A673 (cell line): ENCODE measurements at regions of chr13 and their contacts with region 1.

Region 1: DNA sequence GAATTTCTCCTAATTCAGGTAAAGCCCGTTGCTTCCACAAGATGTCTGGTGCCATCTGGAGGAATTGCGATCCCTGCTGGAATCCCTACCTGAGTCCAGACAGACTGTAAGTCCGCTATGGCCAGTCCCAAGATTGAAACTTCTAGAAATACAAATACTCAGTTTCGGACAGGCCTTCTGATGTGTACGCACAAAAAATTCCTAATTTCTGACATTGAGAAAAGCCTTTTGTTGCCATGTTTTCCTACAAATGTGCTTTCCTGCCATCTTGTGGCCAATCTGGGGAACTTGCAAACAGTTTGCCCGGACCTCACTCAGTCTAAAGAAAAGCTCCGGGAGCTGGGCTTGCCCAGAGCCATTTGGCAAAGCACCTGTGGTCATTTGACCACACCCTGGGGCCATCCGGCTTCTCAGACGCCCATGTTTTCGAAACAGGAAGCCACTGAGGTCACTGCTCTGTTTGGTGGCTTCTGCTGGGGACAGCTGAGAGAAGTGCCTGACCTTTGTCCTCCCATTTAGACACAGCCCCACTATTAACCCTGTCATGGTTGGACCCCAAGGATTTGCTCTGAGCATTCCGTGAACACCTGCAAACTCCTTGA is 79.4 kb downstream of the SLC15A1 start:
- DNase-seq: peak; percentile 75
- H3K4me3 ChIP-seq: no peak overlapping the region
- H3K27ac ChIP-seq: no peak overlapping the region
- H3K4me1 ChIP-seq: no peaks in the 10 kb centered on the region
- H3K27me3 ChIP-seq: no peaks in the 10 kb centered on the region
- CTCF ChIP-seq: peak; percentile 86

Region 2: GRCh38 chr13:97849305-97849704 is 823.7 kb before region 1 on chr13:
- CTCF ChIA-PET with region 1: no interaction called
- POLR2A ChIA-PET with region 1: no interaction called
- intact Hi-C with region 1: loop called (anchors 2 kb)
- DNase-seq: peak; percentile 59
- H3K4me3 ChIP-seq: no peak overlapping the region
- H3K27ac ChIP-seq: no peak overlapping the region
- H3K4me1 ChIP-seq: peaks cover 25% of the 10 kb centered on the region
- H3K27me3 ChIP-seq: no peaks in the 10 kb centered on the region
- CTCF ChIP-seq: peak; percentile 68

Region 3: GRCh38 chr13:98445340-98446233 is 227.5 kb before region 1 on chr13:
- CTCF ChIA-PET with region 1: interaction called, 5 read pairs
- POLR2A ChIA-PET with region 1: no interaction called
- intact Hi-C with region 1: loop called (anchors 1 kb)
- DNase-seq: peak; percentile 74
- H3K4me3 ChIP-seq: no peak overlapping the region
- H3K27ac ChIP-seq: peak overlapping the region; percentile 23
- H3K4me1 ChIP-seq: peaks cover 6% of the 10 kb centered on the region
- H3K27me3 ChIP-seq: no peaks in the 10 kb centered on the region
- CTCF ChIP-seq: peak; percentile 94

Region 4: GRCh38 chr13:98466634-98467236 is 206.3 kb before region 1 on chr13:
- CTCF ChIA-PET with region 1: interaction called, 3 read pairs
- POLR2A ChIA-PET with region 1: no interaction called
- intact Hi-C with region 1: loop called (anchors 5 kb)
- DNase-seq: peak; percentile 71
- H3K4me3 ChIP-seq: no peak overlapping the region
- H3K27ac ChIP-seq: peak overlapping the region; percentile 21
- H3K4me1 ChIP-seq: peaks cover 19% of the 10 kb centered on the region
- H3K27me3 ChIP-seq: no peaks in the 10 kb centered on the region
- CTCF ChIP-seq: peak; percentile 87